ENCODE measurements at regions of chr22 and their contacts with region 1.

Region 1: GRCh38 chr22:25447686-25448434 is 116.6 kb upstream of the GRK3 start:
- DNase-seq: no peak
- H3K4me3 ChIP-seq: peak overlapping the region; percentile 77
- CTCF ChIP-seq: peak; percentile 99

Region 2: DNA sequence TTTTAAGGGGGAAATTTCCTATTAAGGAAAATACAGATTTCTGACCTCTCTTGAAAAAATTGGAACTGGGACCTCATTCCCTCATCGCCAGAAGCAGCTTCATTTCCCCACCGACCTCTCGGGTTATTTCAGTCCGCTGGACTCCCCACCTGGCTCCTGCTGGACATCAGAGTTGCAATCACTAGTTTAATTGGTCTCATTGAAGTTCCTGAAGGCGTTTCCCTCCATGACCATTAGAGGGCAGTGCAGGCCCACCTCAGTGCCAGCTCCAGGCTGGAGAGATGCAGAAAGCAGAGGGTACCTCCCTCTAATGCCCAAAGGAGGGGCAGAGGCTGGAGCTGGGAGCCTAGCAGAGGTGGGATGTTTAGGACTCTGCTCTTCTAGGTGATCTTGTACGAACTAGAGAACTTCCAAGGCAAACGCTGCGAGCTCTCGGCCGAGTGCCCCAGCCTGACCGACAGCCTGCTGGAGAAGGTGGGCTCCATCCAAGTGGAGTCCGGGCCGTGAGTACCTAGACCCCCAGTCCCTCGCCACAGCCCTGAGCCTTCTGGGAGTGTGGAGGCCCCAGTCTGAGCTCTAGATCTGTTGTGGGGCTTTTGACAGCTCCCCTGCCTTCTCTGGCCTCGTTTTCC is 245.5 kb before region 1 on chr22:
- CTCF ChIA-PET with region 1: interaction called, 13 read pairs
- POLR2A ChIA-PET with region 1: no interaction called
- DNase-seq: peak; percentile 2
- H3K4me3 ChIP-seq: no peak overlapping the region
- CTCF ChIP-seq: peak; percentile 85

Region 3: DNA sequence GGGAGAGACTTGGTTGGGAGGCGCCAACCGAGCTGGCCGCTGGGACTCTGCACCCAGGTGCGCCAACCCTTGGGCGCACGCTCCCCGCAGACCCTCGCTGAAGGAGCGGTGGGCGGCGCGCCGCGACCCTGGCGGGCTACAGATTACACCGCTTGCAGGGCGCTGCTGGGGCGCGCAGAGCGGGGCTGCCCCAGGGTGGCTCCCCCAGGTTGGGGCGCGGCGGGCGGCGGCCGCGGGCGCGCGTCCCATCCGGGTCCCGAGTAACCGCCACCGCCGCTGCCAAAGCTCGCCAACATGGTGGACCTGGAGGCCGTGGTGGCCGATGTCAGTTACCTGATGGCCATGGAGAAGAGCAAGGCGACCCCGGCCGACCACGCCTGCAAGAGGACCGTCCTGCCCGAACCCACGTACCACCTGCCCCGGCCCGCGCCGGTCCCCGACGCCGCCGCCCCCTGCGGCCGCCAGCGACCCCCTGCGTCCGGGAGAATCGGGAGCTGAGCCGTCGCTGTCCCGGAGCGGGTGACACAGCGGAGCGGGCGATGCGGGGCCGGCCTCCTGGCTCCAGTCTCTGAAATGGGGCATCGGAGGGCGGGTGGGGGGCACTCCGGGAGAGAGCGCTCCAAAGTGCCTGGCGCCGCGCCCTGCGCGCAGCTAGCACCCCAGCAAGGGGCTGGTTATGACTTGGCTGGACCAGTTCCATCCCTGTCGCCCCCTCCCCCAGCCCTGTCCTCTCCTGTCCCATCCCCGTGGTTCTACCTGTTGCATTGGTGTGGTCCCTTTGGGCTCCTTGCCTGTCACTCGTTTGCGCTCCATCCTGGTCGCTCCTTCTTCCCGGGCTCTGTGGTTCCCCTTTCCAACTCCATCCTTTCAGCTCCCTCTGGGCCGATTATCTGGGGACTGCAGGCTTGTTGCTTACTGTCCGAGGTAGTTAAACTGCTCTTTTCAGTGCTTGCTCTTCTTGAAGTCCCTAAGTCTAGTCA is 26.6 kb before region 1 on chr22:
- CTCF ChIA-PET with region 1: interaction called, 16 read pairs
- POLR2A ChIA-PET with region 1: interaction called, 3 read pairs
- DNase-seq: no peak
- H3K4me3 ChIP-seq: no peak overlapping the region
- CTCF ChIP-seq: no peak

Region 4: DNA sequence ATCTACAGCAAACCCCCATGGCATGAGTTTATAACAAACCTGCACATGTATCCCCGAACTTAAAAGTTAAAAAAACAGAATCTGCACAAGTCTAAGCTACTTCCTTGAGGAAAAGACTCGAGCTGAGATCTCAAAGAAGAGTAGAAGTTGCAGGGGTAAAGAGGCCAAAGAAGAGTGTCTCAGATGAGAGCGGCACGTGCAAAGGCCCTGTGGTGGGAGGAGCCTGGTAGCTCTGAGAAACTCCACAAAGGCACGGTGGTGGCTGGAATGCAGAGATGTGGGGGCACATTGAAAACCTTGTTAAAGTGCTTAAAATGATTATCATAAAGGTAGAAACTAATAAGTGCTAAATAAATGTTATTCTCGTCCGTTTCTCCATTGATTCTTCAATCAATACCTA is 13.4 kb after region 1 on chr22:
- CTCF ChIA-PET with region 1: interaction called, 19 read pairs
- POLR2A ChIA-PET with region 1: no interaction called
- DNase-seq: no peak
- H3K4me3 ChIP-seq: no peak overlapping the region
- CTCF ChIP-seq: no peak

Region 5: GRCh38 chr22:25759825-25760231 is 312.0 kb after region 1 on chr22:
- CTCF ChIA-PET with region 1: interaction called, 13 read pairs
- POLR2A ChIA-PET with region 1: no interaction called
- DNase-seq: peak; percentile 90
- H3K4me3 ChIP-seq: no peak overlapping the region
- CTCF ChIP-seq: no peak

Region 6: DNA sequence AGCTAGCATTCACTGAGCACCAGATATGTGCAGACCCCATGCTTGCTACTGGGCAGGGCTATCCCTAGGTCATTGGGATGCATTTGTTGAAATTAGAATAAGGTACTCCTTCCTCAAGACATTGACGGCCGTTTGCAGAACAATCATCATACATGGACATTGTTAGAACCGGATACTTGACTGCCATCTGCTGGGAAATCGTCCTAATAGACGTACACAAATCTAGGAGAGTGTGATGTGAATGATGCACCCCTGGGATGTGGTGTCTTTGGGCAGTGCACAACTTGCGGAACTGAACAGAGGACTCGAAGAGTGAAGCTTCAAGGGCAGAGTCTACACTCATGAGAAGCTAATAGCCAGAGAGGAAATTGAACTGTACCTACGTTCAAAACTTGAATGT is 330.0 kb after region 1 on chr22:
- CTCF ChIA-PET with region 1: interaction called, 10 read pairs
- POLR2A ChIA-PET with region 1: no interaction called
- DNase-seq: no peak
- H3K4me3 ChIP-seq: no peak overlapping the region
- CTCF ChIP-seq: peak; percentile 43

Measured in AG04449 (cell line).